Ascending aorta (tissue), 2 donors: ENCODE measurements at regions of chr6 and their contacts with region 1.

Region 1: DNA sequence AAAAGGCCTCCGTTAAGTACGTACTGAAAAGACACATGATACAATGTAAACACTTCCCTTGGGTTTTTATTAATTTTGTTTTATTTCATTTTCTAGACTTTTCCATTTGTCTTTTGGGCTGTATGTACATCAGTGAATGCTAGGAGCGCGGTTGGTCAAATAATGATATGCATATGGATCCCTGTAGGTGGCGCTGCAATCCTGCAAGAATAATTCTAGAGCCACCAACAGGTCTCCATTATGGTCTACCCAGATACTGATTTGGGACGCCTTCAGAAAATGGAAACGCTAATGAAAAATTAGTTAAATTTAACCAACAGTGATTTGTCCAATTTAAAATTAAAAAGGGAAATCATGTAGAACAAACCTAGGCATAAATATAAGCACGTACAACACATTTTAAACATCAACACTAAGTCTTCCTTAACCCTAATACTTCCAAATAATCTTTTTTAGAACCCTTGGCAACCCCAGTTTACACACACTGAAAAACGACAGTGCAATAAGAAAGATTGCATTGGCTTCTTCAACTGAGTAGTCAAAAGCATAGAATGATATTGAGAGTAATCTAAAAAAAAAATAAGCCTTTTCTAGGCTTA is 433.5 kb downstream of the RFPL4B start:
- DNase-seq: peak in 1 of 2 donors; percentile 74
- H3K4me3 ChIP-seq: no peak overlapping the region
- H3K27ac ChIP-seq: no peak overlapping the region
- H3K4me1 ChIP-seq: no peaks in the 10 kb centered on the region
- H3K27me3 ChIP-seq: no peaks in the 10 kb centered on the region
- CTCF ChIP-seq: peak; percentile 57 to 73 (median 69)

Region 2: GRCh38 chr6:113182370-113183141 is 402.0 kb after region 1 on chr6:
- intact Hi-C with region 1: loop called (anchors 10 kb)
- DNase-seq: no peak
- H3K4me3 ChIP-seq: no peak overlapping the region
- H3K27ac ChIP-seq: no peak overlapping the region
- H3K4me1 ChIP-seq: no peaks in the 10 kb centered on the region
- H3K27me3 ChIP-seq: no peaks in the 10 kb centered on the region
- CTCF ChIP-seq: no peak

Region 3: GRCh38 chr6:113909234-113909856 is 1128.7 kb after region 1 on chr6:
- intact Hi-C with region 1: loop called (anchors 5 kb)
- DNase-seq: no peak
- H3K4me3 ChIP-seq: no peak overlapping the region
- H3K27ac ChIP-seq: no peak overlapping the region
- H3K4me1 ChIP-seq: peaks cover 0 to under 1% of the 10 kb centered on the region in 2 donors
- H3K27me3 ChIP-seq: no peaks in the 10 kb centered on the region
- CTCF ChIP-seq: peak in 2 of 3 experiments; percentile 57 to 75